ENCODE measurements at regions of chr16 and their contacts with region 1.

Region 1: GRCh38 chr16:11520442-11520841 is 66.3 kb downstream of the LITAF start:
- DNase-seq: no peak
- H3K4me3 ChIP-seq: no peak overlapping the region
- H3K27ac ChIP-seq: no peak overlapping the region
- H3K4me1 ChIP-seq: peaks cover 0 to 14% (median under 1%) of the 10 kb centered on the region in 4 experiments
- H3K27me3 ChIP-seq: peaks cover 0 to under 1% (median 0%) of the 10 kb centered on the region in 5 experiments

Region 2: DNA sequence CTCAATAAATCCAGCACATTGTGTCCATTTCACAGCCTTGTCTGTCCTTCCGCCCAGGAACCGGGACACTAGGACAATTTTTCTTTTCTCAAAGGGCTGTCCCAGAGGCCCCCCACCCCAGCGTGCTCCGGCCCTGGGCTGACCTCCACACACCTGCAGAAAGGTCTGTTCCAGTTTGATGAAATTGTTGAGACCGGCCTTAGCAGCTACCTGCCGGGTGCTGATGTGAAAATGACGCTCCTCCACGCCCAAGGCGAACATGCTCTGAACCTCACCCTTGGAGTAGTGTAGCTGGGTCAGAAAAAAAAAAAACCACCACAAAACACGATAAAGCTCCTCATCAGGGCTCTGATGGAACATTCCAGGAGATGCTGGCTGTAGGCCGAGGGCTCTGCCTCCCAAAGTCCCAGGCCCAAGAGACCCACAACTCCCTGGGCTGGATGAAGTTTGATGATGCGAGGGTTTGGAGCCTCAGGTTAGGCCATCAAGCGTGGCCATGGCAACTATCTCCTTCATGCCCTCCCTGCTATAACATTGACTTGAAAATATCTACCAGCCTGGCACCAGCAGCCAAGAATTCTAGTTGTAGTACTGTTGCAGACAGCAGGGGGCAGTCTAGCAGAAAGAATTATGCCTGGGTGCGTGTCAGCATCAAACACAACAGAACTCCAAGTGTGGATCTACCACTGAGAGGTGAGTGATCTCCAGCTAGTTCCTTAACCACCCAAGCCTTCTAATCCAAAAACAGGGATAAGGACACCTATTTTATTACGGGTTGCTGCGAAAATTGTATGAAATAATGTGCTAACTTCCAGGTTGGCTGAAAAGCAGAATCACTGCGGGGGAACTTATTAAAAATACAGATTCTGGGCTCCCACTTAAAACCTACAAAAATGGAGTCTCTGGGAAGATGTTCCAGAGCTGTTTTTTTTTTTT is 113.1 kb before region 1 on chr16:
- CTCF ChIA-PET with region 1: no interaction called
- POLR2A ChIA-PET with region 1: no interaction called
- DNase-seq: peak; percentile 72 to 85 (median 82)
- H3K4me3 ChIP-seq: no peak overlapping the region
- H3K27ac ChIP-seq: no peak overlapping the region
- H3K4me1 ChIP-seq: peaks cover 0 to 42% (median 33%) of the 10 kb centered on the region in 4 experiments
- H3K27me3 ChIP-seq: no peaks in the 10 kb centered on the region

Region 3: DNA sequence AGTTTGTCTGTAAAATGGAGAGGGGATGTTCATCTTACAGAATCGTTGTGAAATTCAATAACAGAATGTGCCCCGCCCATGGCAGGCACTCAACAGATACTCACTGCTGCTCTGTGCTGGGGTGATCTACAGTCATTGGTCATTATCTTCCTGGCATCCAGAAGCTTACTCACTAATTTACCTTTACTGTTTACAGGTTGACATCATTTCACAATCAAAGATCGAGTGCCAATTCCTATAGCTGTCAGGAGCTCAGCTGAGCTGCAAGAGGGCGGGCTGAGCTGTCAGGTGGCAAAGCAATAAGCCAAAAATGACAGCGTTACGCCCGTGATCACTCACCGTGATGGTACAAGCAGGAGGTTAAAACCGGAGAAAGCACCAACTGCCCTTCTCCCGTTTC is 15.0 kb after region 1 on chr16:
- CTCF ChIA-PET with region 1: interaction called, 14 read pairs
- POLR2A ChIA-PET with region 1: no interaction called
- DNase-seq: no peak
- H3K4me3 ChIP-seq: no peak overlapping the region
- H3K27ac ChIP-seq: no peak overlapping the region
- H3K4me1 ChIP-seq: peaks cover 0 to 4% (median under 1%) of the 10 kb centered on the region in 4 experiments
- H3K27me3 ChIP-seq: no peaks in the 10 kb centered on the region

Measured in common myeloid progenitor, CD34-positive (primary cell).